Left cardiac atrium (tissue), 4 donors: ENCODE measurements at regions of chr15 and their contacts with region 1.

Region 1: DNA sequence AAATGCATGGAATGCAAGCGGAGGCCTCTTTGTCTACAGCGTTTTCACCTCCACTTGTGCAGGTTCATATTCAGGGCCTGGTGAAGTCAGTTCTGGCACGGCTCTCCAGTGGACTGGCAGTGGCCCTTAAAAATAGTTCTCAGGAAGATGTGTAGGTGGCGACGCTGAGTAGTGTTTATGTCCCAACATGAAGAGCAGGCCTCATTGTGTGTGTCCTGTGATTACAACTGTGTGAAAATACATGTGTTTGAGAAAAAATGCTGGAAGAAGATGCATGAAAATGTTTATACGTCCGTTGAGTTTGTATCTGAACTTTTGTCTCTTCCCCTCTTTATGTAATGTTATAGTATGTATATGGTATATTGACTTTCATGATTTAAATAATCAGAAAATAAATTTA is 7.2 kb downstream of the LIPC start:
- DNase-seq: peak; percentile 68
- ATAC-seq: peak; percentile 56 to 67

Region 2: DNA sequence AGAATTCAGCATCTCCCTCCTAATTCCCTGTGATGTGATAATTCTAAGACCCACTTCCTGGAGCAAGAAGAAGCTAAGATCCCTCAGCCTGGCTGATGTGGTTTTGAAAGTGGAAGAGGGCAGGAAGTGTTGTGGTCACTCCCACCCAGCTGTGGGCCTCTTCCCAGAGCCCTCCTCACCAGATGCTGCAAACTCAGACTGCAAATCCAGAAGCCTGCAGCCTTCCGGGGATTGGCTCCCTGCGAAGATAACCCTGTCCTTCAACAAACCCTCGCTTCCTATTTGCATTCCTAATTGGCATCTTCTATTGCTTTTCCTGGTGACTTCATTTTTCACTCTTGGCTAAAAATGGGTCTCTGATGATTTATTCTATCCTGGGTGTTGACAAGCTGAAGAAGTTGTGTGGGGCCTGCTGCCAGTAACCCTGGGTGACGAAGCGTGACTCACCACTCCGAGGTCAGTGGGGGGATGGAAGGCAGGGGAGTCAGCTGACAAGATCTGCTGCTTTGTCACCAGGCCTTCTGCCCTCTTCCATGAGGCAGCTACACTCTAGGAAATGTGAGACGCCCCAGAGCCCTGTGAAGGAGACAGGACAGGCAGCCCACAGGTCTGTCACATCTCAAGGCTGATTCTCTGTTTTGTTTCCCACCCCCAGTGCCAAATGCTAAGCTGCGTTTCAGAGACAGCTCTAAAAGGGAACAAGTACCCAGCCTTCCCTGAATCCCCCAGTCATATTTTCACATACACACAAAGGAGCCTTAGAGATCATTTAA is 106.9 kb before region 1 on chr15:
- intact Hi-C with region 1: loop called in 1 of 2 experiments (anchors 5 kb)
- DNase-seq: peak; percentile 94
- ATAC-seq: peak; percentile 97

Region 3: DNA sequence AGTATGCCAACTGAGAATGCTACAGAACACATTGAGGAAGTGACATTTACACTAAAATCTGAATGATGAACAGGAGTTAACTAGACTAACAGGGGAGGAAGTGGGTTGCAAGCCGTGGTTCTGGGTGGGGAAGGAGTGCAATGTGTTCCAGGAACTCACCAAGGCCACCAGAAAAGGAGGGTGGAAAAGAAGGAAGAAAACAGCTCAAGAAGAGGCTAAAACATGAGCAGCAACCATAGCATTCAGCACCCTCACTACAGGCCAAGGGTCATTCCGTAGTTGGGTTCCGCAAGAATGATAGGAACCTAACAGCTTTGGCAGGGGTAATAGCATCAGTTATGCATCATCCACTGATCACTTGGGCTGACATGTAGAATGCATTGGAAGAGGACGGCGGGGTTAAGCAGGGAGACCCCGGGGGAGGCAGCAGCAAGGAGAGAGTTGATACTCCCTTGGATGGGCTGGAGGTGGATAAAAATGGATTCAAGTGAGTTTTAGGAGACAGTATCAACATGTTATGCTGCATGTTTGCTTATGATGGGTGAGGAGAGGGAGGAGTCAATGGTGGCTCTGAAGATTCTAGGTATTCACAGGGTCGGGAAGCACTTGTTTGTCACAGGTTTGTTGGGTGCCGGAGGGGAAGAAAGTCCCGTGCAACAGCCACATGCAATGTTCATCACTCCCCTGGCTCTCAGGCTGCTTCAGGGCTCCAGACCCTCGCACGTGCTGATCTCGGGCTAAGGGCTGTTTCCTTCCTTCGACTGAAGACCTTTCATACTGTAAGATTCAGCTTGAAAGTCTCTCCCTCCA is 46.0 kb after region 1 on chr15:
- intact Hi-C with region 1: loop called in 1 of 2 experiments (anchors 5 kb)
- DNase-seq: peak; percentile 46
- ATAC-seq: peak in 1 of 2 donors; percentile 19

Region 4: GRCh38 chr15:58628206-58628947 is 189.4 kb after region 1 on chr15:
- intact Hi-C with region 1: loop called in 1 of 2 experiments (anchors 10 kb)
- DNase-seq: no peak
- ATAC-seq: peak; percentile 53 to 59

Region 5: DNA sequence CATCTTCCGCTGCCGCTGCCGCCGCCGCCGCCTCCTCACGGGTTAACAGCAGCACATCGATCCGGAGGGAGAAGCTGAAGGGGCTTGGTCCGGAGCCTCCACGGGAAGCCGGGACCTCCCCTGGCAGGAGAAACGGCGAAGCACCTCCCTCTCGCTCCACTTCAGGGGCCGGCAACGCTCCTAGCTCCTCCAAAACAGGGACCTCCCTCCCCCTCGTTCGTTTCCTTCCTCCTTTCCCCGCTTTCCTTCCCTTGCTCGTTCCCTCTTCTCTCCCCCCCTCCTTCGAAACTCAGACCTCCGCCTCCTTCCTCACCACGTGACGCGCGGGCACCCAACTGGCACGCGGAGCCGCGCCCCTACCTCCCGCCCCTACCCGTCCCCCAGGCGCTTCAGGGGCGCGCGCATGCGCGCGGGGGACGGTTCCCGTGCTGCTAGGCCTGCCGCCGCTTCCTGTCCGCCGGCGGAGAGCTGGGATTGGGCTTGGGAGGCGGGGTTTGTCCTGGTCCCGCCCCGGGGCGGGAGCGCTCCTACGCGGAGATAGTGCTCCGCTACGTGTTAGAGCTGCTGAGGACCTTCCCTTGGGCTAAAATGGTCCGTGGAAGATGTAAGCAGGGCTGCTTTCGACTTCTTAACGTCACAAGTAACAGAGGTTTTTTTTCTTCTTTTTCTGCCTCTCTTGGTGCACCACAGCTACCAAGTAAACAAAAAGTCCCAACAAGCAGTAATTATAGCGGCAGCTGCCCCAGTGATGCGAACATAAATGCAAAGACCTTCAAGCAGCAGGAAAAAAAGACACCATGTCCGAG is 310.8 kb after region 1 on chr15 and contains the start of gene ADAM10:
- intact Hi-C with region 1: loop called in 1 of 2 experiments (anchors 10 kb)
- DNase-seq: peak; percentile 99
- ATAC-seq: peak; percentile 97 to 98
- total RNA-seq, gene ADAM10: 79.8 to 84.8 TPM